ENCODE measurements at regions of chr1 and their contacts with region 1.

Region 1: DNA sequence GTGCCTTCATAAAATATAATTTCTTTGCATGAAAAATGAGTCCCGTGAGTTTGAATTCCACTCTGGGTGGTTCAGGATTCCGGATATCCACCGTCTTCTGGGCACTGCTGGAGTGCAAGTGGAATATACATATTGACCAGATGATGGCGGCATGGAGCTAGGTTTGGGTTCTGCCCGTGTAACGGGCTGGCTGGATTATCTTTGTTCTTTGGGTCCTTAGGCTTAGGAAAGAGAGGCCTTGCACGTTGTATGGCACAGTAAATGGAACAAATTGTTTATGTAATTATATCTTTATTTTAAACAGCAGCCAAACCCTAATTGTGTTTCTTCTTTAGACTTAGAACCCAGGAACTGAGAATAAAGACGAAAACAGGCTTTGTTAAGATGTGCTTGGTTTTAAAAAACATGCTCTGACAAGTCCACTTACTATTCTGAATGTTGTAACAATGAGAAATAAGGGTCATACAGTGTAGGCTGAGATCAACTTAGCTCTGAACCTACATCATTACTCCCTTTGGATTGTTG is 13.5 kb upstream of the ACBD6 start:
- DNase-seq: peak; percentile 84
- ATAC-seq: peak; percentile 98
- H3K4me3 ChIP-seq: no peak overlapping the region
- H3K27ac ChIP-seq: peak overlapping the region; percentile 98; the same call in 1 of the 2 replicates
- H3K4me1 ChIP-seq: peaks cover 8% of the 10 kb centered on the region
- H3K27me3 ChIP-seq: no peaks in the 10 kb centered on the region
- CTCF ChIP-seq: peak; percentile 94
- POLR2A ChIP-seq: peak; percentile 56
- RAD21 ChIP-seq: peak; percentile 98

Region 2: DNA sequence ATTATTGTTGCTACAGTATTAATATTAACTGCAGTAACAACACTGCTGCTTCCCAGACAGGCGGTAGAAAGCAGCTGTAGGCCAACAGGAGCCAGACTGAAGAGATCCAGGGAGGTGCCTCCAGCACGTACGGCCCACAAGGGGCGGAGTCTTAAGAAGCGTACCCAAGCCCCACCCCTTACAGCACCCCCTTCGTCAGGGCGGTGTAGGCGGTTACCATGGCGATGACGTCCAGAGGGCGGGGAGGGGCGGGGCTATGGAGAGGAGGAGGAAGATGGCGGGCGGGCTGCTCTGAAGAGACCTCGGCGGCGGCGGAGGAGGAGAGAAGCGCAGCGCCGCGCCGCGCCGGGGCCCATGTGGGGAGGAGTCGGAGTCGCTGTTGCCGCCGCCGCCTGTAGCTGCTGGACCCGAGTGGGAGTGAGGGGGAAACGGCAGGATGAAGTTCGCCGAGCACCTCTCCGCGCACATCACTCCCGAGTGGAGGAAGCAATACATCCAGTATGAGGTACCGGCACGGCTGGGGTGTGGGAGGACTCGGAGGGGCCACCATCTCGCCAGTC is 115.9 kb after region 1 on chr1 and contains the start of gene XPR1:
- CTCF ChIA-PET with region 1: interaction called, 5 read pairs
- POLR2A ChIA-PET with region 1: no interaction called
- dilution Hi-C with region 1: no loop called
- in situ Hi-C with region 1: no loop called
- intact Hi-C with region 1: loop called (anchors 1 kb)
- DNase-seq: peak; percentile 99
- ATAC-seq: peak; percentile 99
- H3K4me3 ChIP-seq: peak within 1 kb of the TSS; percentile 94
- H3K27ac ChIP-seq: peak within 1 kb of the TSS; percentile 89
- H3K4me1 ChIP-seq: no peaks in the 10 kb centered on the region
- H3K27me3 ChIP-seq: no peaks in the 10 kb centered on the region
- CTCF ChIP-seq: peak; percentile 37
- POLR2A ChIP-seq: peak; percentile 74
- RAD21 ChIP-seq: peak; percentile 47
- total RNA-seq, gene XPR1: 25.1 and 25.3 TPM in 2 replicates

Region 3: GRCh38 chr1:180863158-180863775 is 347.3 kb after region 1 on chr1:
- CTCF ChIA-PET with region 1: interaction called, 19 read pairs
- POLR2A ChIA-PET with region 1: interaction called, 6 read pairs
- dilution Hi-C with region 1: no loop called
- in situ Hi-C with region 1: no loop called
- intact Hi-C with region 1: loop called (anchors 5 kb)
- DNase-seq: peak; percentile 68
- ATAC-seq: peak; percentile 95
- H3K4me3 ChIP-seq: no peak overlapping the region
- H3K27ac ChIP-seq: peak overlapping the region; percentile 29; the same call in 1 of the 2 replicates
- H3K4me1 ChIP-seq: no peaks in the 10 kb centered on the region
- H3K27me3 ChIP-seq: no peaks in the 10 kb centered on the region
- CTCF ChIP-seq: peak; percentile 80
- POLR2A ChIP-seq: no peak
- RAD21 ChIP-seq: peak; percentile 86

Region 4: GRCh38 chr1:181021811-181022434 is 506.0 kb after region 1 on chr1:
- CTCF ChIA-PET with region 1: no interaction called
- POLR2A ChIA-PET with region 1: no interaction called
- dilution Hi-C with region 1: no loop called
- in situ Hi-C with region 1: no loop called
- intact Hi-C with region 1: loop called (anchors 10 kb)
- DNase-seq: peak; percentile 73
- ATAC-seq: peak; percentile 49
- H3K4me3 ChIP-seq: peak overlapping the region; percentile 93
- H3K27ac ChIP-seq: peak overlapping the region; percentile 78
- H3K4me1 ChIP-seq: no peaks in the 10 kb centered on the region
- H3K27me3 ChIP-seq: no peaks in the 10 kb centered on the region
- CTCF ChIP-seq: no peak
- POLR2A ChIP-seq: no peak
- RAD21 ChIP-seq: no peak

Region 5: DNA sequence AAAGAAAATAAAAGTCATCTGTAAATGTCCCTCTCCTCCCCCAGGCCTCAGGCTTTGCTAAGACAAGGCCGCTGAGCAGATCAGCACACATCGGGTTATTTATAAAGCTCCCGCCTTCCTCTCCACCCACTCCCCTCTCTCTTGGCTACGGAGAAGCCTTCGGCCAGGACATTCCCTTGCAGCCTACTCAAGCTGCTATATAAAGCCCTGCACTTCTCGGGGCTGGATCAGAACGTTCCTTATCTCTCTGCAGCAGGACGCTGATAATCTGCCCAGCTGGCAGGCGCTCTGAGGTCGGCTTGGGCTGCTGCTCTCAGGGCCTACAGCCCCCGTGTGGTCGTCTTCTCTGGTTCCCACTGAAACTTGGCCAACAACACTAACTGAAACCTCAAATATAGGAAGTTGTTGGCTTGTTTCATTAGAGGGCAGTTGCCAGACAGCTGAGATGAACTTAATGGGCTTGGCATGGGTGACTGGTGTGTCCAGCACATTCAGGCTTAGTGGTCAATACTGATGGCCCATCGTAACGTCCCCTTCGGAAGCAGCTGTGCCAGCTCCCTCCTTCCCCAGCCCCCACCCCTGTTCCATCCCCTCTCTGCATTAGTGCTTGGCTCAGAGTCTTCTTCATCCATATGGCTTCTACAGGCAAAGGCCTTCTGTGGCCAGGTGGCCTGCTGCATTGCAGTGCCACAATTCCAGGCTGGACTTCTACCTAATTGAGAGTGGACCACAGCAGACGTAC is 637.1 kb after region 1 on chr1:
- CTCF ChIA-PET with region 1: no interaction called
- POLR2A ChIA-PET with region 1: no interaction called
- dilution Hi-C with region 1: no loop called
- in situ Hi-C with region 1: loop called (anchors 5 kb)
- intact Hi-C with region 1: no loop called
- DNase-seq: peak; percentile 94
- ATAC-seq: peak; percentile 95
- H3K4me3 ChIP-seq: no peak overlapping the region
- H3K27ac ChIP-seq: peak overlapping the region; percentile 32
- H3K4me1 ChIP-seq: peaks cover 6% of the 10 kb centered on the region
- H3K27me3 ChIP-seq: no peaks in the 10 kb centered on the region
- CTCF ChIP-seq: peak; percentile 45
- POLR2A ChIP-seq: peak; percentile 83
- RAD21 ChIP-seq: peak; percentile 47

Measured in IMR-90 (cell line).